ENCODE measurements at regions of chr13 and their contacts with region 1.

Region 1: DNA sequence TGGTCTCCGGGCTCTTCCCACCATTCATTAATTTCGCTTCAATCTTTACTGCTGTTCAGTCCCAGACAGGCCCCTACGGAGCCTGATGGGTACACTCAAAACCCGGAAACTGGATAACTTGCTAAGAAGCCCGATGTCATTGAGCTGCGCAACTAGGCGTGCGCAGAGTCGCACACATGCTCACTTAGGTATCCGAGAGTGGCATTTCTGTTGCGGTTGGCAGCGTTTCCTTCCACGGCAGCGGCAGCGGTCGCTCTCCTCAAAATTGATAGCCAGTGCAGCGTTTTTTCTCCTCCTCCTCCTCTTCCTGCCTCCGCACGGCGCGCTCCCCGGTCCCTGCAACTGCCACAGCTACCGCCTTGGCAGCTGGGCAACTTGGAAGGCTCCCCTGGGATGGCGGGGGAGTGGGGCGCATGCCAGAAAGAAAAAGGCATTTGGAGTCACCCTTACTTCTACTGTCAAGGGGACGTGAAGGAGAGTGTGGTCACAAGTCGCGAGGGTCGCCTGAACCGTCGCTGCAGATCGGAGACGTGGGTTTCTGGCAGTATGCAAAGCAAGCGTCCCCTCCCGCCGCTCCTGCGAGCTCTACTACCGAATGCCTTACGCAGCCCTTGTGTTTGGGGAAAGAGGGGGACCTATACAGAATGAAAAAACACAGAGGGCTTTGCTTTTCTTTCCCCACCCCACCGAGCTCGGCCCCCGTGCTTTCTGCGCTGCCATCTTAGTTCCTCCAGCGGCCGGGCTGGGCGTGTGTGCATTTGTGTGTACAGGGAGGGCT is 2.4 kb upstream of the MYCBP2 start:
- DNase-seq: peak; percentile 96
- H3K4me3 Mint-ChIP-seq: peak overlapping the region; percentile 98
- H3K27ac Mint-ChIP-seq: peak overlapping the region; percentile 96
- H3K4me1 Mint-ChIP-seq: peaks cover 35% of the 10 kb centered on the region
- H3K27me3 Mint-ChIP-seq: no peaks in the 10 kb centered on the region

Region 2: DNA sequence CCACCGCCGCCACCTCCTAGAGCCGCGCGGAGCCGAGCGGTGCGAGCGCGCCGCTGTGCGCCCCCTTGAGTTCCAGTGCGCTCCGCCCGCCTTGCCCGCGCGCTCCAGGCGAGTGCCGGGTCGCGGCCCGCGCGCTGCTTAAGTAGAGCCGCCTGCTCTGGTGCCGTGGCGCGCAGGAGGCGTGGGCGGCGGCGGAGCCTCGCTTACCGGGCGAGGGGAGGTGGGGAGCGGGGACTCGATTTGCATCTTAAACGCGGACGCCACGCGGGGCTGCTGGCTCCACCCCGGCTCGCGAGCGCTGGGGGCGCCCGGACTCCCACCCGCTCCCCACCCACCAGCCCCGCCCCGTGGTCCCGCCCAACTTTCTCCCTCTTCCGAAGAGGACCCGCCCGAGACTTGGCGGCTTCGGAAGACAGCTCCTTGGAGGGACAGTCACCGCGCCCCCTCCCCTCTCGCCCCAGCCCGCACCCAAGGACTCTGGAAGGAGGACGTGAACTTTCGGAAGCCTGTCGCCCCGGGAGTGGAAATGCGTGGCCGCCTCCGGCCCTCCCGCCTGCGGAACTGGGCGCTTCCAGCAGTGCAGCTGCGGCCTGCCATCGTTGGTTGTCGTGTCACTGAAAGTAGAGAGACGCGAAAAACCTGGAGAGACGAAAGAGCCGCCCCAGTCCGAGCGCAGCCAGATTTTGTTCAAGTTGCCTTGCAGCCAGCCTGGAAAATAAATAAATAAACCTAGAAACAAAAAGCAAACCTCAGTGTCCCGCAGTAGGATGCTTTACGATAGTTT is 442.8 kb before region 1 on chr13 and contains the start of gene KCTD12:
- CTCF ChIA-PET with region 1: no interaction called
- POLR2A ChIA-PET with region 1: no interaction called
- intact Hi-C with region 1: loop called (anchors 2 kb)
- DNase-seq: peak; percentile 77
- H3K4me3 Mint-ChIP-seq: peak within 1 kb of the TSS; percentile 84
- H3K27ac Mint-ChIP-seq: peak within 1 kb of the TSS; percentile 50
- H3K4me1 Mint-ChIP-seq: peaks cover 30% of the 10 kb centered on the region
- H3K27me3 Mint-ChIP-seq: peaks cover 12% of the 10 kb centered on the region
- total RNA-seq, gene KCTD12: 6.1 to 6.7 TPM

Region 3: GRCh38 chr13:77184455-77184854 is 144.9 kb before region 1 on chr13:
- CTCF ChIA-PET with region 1: interaction called, 3 read pairs
- POLR2A ChIA-PET with region 1: no interaction called
- intact Hi-C with region 1: loop called (anchors 1 kb)
- DNase-seq: peak; percentile 77
- H3K4me3 Mint-ChIP-seq: no peak overlapping the region
- H3K27ac Mint-ChIP-seq: peak overlapping the region; percentile 40
- H3K4me1 Mint-ChIP-seq: peaks cover 22% of the 10 kb centered on the region
- H3K27me3 Mint-ChIP-seq: no peaks in the 10 kb centered on the region

Region 4: GRCh38 chr13:77316430-77316829 is 12.9 kb before region 1 on chr13:
- CTCF ChIA-PET with region 1: interaction called, 13 read pairs
- POLR2A ChIA-PET with region 1: interaction called, 5 read pairs
- intact Hi-C with region 1: loop called (anchors 1 kb)
- DNase-seq: no peak
- H3K4me3 Mint-ChIP-seq: no peak overlapping the region
- H3K27ac Mint-ChIP-seq: no peak overlapping the region
- H3K4me1 Mint-ChIP-seq: peaks cover 80% of the 10 kb centered on the region
- H3K27me3 Mint-ChIP-seq: no peaks in the 10 kb centered on the region

Region 5: DNA sequence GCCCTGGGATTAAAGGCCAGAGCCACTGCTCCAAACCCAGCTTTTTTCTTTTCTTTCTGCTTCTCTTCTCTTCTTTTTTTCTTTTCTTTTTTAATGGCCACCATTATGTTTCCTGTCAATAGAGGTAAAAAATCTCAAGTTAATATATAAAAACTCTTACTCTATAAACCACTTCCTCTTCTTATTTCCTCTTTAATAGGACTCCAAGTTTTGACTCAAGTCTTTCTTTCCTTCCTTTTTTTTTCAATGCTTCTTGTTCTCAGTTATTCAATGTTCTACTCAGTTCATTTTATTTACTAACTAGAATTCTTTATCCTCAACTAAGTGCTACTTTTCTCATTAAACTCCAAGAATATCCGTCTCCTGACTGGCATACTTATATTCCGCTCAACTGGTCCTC is 24.7 kb after region 1 on chr13:
- CTCF ChIA-PET with region 1: no interaction called
- POLR2A ChIA-PET with region 1: no interaction called
- intact Hi-C with region 1: no loop called
- DNase-seq: no peak
- H3K4me3 Mint-ChIP-seq: no peak overlapping the region
- H3K27ac Mint-ChIP-seq: no peak overlapping the region
- H3K4me1 Mint-ChIP-seq: peaks cover 7% of the 10 kb centered on the region
- H3K27me3 Mint-ChIP-seq: no peaks in the 10 kb centered on the region

Region 6: GRCh38 chr13:77374786-77375185 is 45.5 kb after region 1 on chr13:
- CTCF ChIA-PET with region 1: no interaction called
- POLR2A ChIA-PET with region 1: no interaction called
- intact Hi-C with region 1: no loop called
- DNase-seq: peak; percentile 36
- H3K4me3 Mint-ChIP-seq: no peak overlapping the region
- H3K27ac Mint-ChIP-seq: no peak overlapping the region
- H3K4me1 Mint-ChIP-seq: peaks cover 4% of the 10 kb centered on the region
- H3K27me3 Mint-ChIP-seq: no peaks in the 10 kb centered on the region

Region 7: GRCh38 chr13:77429320-77430142 is 100.2 kb after region 1 on chr13:
- CTCF ChIA-PET with region 1: no interaction called
- POLR2A ChIA-PET with region 1: interaction called, 6 read pairs
- intact Hi-C with region 1: loop called (anchors 1 kb)
- DNase-seq: peak; percentile 80
- H3K4me3 Mint-ChIP-seq: peak overlapping the region; percentile 7
- H3K27ac Mint-ChIP-seq: peak overlapping the region; percentile 77
- H3K4me1 Mint-ChIP-seq: peaks cover 17% of the 10 kb centered on the region
- H3K27me3 Mint-ChIP-seq: no peaks in the 10 kb centered on the region

Region 8: DNA sequence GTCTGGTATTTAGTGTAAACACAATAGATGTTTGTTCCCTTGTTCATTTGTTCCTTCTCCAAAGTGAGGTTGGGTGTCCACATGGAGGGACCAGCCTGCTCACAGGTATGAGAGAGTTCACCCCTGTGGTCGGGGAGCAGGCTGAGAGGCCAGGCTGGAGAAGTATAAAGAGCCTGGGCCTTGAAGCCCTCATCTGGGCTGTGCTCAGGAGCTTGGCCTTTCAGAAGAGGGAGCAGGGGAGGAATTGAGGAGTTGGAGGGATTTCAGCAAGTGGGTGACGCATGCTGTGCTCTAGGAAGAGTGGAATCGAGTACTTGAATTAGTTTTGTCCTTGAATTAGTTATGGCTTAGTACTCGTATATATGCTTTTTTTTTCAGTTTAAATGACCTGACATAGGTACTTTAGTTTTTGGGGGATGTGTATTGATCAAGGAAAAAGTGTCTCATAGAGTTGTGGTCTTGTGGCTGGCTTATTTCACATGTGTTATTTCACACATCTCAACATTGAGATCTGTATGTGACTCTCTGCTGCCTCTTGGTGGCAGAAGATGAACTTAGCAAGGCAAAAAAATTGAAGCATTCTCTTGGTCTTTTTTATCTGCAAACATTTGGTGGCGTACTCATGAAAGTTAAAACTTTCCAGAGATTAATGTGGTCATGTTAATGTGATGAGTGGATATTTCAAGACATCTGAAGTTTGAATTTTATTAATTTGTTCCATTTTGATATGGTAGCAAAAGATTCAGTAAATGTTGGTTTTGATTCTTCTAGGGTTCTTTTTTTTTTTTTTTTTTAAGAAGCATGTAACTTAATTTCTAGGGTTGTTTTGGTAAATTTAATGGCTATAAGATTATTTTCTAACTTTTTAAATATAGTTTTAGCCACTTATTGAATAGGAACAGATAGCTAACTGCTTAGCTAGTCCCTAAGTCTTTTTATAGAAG is 422.5 kb after region 1 on chr13:
- CTCF ChIA-PET with region 1: no interaction called
- POLR2A ChIA-PET with region 1: no interaction called
- intact Hi-C with region 1: loop called (anchors 5 kb)
- DNase-seq: peak; percentile 46
- H3K4me3 Mint-ChIP-seq: no peak overlapping the region
- H3K27ac Mint-ChIP-seq: no peak overlapping the region
- H3K4me1 Mint-ChIP-seq: peaks cover 13% of the 10 kb centered on the region
- H3K27me3 Mint-ChIP-seq: no peaks in the 10 kb centered on the region

Measured in activated CD4-positive, alpha-beta memory T cell treated with anti-CD3 and anti-CD28 coated beads for 36 hours (primary cell).